ENCODE measurements at regions of chr17 and their contacts with region 1.

Region 1: DNA sequence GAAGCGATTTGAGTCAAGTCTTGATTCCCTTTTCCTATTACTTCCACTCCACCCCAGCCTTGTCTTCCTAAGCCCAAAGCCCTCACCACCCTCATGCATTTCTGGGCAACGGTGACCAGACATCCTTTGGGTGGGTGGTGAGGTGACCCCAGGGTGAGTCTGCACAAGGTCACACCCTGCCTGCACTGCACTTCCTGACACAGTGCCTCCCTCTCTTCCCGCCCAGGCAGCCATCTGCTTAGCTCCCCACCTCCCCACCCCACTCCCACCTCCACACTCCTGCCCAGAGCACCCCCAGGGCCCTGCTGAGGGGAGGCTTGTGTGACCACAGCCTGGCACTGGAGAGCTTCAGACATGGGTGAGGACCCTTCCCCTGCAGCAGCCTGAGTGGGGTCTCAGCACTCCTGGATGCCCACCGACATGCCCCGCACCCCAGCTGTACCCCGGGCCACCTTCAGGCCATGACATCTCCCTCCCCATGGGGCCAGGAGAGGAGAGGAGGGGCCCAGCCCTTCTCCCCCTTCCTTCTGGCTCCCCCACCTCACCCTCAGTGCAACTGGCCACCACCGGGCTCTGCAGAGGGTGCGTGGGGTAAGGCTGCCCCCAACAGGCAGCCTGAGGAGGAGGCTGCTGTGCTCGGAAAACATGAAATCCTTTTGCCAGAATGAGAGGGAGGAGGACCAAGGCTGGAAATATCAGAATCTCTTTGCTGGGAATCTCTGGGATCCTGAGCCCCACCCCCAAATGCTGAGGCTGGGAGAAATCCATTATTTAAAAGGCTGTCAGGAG is 68.6 kb downstream of the CCT6B start:
- DNase-seq: peak in 6 of 14 experiments; percentile 2 to 52 (median 22)
- ATAC-seq: no peak
- H3K4me3 ChIP-seq: no peak overlapping the region
- H3K4me3 Mint-ChIP-seq: no peak overlapping the region
- H3K27ac ChIP-seq: no peak overlapping the region
- H3K27ac Mint-ChIP-seq: no peak overlapping the region
- H3K4me1 ChIP-seq: peaks cover 3% of the 10 kb centered on the region
- H3K4me1 Mint-ChIP-seq: no peaks in the 10 kb centered on the region
- H3K27me3 ChIP-seq: peaks cover 13 to 14% of the 10 kb centered on the region in 2 experiments
- H3K27me3 Mint-ChIP-seq: peaks cover 48% of the 10 kb centered on the region
- CTCF ChIP-seq: peak; percentile 18

Region 2: DNA sequence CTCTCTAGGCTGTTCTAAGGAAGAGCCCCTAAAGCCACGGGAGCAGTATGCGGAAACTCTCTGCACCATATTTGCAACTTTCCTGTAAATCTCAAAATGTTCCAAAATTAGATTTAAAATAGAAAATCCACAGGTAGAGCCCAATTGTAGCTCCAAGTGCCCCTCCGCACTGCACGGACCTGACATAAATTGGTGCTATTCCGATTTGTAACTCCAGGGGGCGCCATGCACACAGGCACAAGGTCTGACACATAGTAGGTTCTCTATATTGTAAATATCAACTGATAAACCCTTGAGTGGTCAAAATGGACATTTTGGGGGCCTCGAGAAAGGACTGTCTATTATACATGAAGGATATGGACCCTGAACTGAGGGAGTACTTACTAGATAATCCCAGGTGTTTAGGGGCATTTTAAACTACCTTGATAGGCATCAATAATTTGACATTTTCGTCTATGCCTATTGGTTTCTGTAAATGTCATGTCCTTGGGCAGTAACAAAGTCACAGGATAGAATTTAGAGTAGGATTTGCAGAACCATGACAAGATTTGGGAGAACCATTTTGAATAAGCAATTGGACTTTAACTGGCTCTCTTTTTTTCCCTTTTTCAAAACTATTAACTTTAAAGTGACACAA is 349.8 kb before region 1 on chr17:
- CTCF ChIA-PET with region 1: no interaction called
- POLR2A ChIA-PET with region 1: no interaction called
- intact Hi-C with region 1: loop called in 1 of 2 experiments (anchors 5 kb)
- DNase-seq: peak; percentile 29 to 75 (median 50)
- ATAC-seq: no peak
- H3K4me3 ChIP-seq: no peak overlapping the region
- H3K4me3 Mint-ChIP-seq: no peak overlapping the region
- H3K27ac ChIP-seq: no peak overlapping the region
- H3K27ac Mint-ChIP-seq: no peak overlapping the region
- H3K4me1 ChIP-seq: no peaks in the 10 kb centered on the region
- H3K4me1 Mint-ChIP-seq: no peaks in the 10 kb centered on the region
- H3K27me3 ChIP-seq: peaks cover 0 to 4% of the 10 kb centered on the region in 2 experiments
- H3K27me3 Mint-ChIP-seq: peaks cover 59% of the 10 kb centered on the region
- CTCF ChIP-seq: peak; percentile 88

Measured in CD4-positive, alpha-beta T cell (primary cell).